Heart left ventricle (tissue), 16 donors: ENCODE measurements at regions of chr10 and their contacts with region 1.

Region 1: GRCh38 chr10:7561216-7561893 is 105.4 kb downstream of the ITIH5 start:
- DNase-seq: peak; percentile 79 to 91 (median 85)
- ATAC-seq: peak; percentile 87 to 93 (median 93)
- H3K4me3 ChIP-seq: no peak overlapping the region
- H3K27ac ChIP-seq: peak overlapping the region; percentile 4 to 80 (median 44)
- H3K4me1 ChIP-seq: peaks cover 0 to 47% (median 28%) of the 10 kb centered on the region in 12 donors
- H3K27me3 ChIP-seq: no peaks in the 10 kb centered on the region
- CTCF ChIP-seq: peak in 5 of 12 donors; percentile 9 to 30 (median 24)
- POLR2A ChIP-seq: no peak

Region 2: DNA sequence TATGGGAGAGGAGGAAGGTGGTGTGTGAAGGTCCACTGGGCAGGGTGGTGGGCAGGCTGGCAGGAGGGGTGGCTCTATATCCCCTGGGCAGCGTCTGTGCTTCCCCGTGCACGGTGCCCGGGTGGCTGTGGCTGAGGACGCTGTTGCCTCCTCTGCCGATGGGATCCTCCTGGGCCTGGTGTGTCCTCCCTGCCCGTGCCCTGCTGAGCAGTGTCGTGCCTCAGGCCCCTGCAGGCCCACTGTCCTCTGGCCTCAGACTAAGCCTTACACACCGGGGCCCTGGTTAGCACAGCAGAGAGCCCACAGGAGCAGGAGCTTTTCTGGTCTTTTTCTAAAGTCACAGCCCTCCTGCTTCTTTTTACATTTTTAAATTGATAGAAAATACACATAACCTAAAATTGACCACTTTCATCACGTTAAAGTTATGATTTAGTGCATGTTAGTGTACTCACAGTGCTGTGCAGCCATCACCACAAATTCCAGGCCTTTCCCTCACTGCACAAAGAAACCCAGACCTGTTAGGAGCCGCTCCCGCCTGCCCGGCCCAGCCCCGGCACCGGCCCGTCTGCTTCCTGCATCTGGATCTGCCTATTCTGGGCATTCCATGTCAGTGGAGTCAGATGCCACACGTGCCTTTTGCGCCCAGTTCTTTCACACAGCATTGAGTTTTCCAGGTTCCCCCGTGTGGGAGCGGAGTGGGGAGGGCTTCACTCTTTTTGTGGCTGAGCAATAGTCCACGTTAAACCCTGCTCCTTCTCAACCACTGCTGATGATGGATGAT is 1339.2 kb before region 1 on chr10:
- intact Hi-C with region 1: no loop called
- DNase-seq: no peak
- ATAC-seq: no peak
- H3K4me3 ChIP-seq: no peak overlapping the region
- H3K27ac ChIP-seq: no peak overlapping the region
- H3K4me1 ChIP-seq: no peaks in the 10 kb centered on the region
- H3K27me3 ChIP-seq: no peaks in the 10 kb centered on the region
- CTCF ChIP-seq: no peak
- POLR2A ChIP-seq: no peak

Region 3: DNA sequence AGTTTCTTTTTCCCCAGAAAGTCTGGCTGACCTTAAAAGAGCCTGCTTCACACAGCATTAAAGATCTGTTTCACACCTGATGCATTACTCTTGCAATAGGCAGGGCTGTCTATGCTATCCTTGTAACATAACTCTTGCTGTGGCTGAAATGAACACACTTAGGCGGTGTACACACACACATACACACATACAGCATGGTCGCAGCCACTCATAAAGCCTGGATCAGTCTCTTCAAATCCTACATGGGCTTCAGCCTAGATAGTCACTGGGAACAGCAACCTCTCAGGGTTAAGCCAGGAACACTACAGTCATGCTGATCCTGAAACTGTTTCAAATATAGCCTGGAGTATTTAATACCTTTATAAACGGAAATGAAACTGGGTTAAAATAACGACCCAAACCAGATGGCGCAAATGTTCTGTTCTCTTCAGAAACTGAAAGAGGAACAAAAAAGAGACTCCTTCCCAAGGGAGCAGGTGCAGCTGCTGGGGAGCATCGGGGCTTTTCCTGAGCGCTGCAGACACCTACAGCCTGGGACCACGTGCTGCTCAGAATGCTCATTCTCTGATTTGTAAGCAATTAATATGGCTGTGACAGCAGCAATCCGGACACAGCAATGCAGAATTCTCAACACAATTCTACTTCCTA is 89.5 kb before region 1 on chr10:
- intact Hi-C with region 1: no loop called
- DNase-seq: no peak
- ATAC-seq: peak in 3 of 4 donors; percentile 33 to 53 (median 34)
- H3K4me3 ChIP-seq: peak overlapping the region in 1 of 12 donors; percentile 34
- H3K27ac ChIP-seq: peak overlapping the region in 1 of 12 donors; percentile 79
- H3K4me1 ChIP-seq: peaks cover 0 to 38% (median 9%) of the 10 kb centered on the region in 12 donors
- H3K27me3 ChIP-seq: no peaks in the 10 kb centered on the region
- CTCF ChIP-seq: no peak
- POLR2A ChIP-seq: no peak

Region 4: GRCh38 chr10:7666253-7667081 is 105.1 kb after region 1 on chr10 and contains the start of gene ITIH5:
- intact Hi-C with region 1: loop called in 1 of 10 experiments (anchors 5 kb)
- DNase-seq: peak in 3 of 5 donors; percentile 22 to 72 (median 36)
- ATAC-seq: peak in 3 of 4 donors; percentile 28 to 59 (median 35)
- H3K4me3 ChIP-seq: peak within 1 kb of the TSS; percentile 56 to 91 (median 71)
- H3K27ac ChIP-seq: peak within 1 kb of the TSS in 8 of 12 donors; percentile 22 to 82 (median 62)
- H3K4me1 ChIP-seq: peaks cover 0 to 28% (median 9%) of the 10 kb centered on the region in 12 donors
- H3K27me3 ChIP-seq: peaks cover 0 to 62% (median 5%) of the 10 kb centered on the region in 9 donors
- CTCF ChIP-seq: no peak
- POLR2A ChIP-seq: no peak
- total RNA-seq, gene ITIH5: 2.9 to 20.4 (median 12.3) TPM